BJ (cell line): ENCODE measurements at regions of chr5 and their contacts with region 1.

Region 1: GRCh38 chr5:138241688-138242571 is 28.8 kb upstream of the CDC23 start:
- DNase-seq: no peak
- H3K4me3 ChIP-seq: peak overlapping the region; percentile 33
- H3K27me3 ChIP-seq: peaks cover 34% of the 10 kb centered on the region
- CTCF ChIP-seq: no peak

Region 2: GRCh38 chr5:138230981-138231589 is 10.8 kb before region 1 on chr5:
- CTCF ChIA-PET with region 1: interaction called, 15 read pairs
- POLR2A ChIA-PET with region 1: no interaction called
- DNase-seq: no peak
- H3K4me3 ChIP-seq: no peak overlapping the region
- H3K27me3 ChIP-seq: peaks cover 1% of the 10 kb centered on the region; the same call in 1 of the 2 replicates
- CTCF ChIP-seq: no peak

Region 3: DNA sequence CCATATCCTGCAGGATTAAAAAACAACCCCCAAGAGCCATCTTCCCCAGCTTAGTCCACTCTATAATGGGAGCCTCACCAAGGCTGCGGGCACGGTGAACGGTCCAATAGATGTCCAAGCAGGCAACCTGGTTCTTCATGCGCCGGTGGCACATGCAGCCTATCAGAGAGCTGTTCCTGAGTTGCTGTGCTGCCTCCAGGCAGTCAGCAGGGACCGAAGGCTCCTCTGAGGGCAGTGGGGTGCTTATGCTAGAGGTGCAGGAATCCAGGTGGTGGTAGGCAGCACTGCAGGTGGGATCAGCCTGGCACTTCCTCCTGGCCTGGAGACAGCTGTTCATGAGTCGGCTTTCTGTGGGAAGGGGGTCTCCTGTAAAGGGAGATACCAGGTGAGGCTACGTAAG is 22.3 kb after region 1 on chr5:
- CTCF ChIA-PET with region 1: no interaction called
- POLR2A ChIA-PET with region 1: no interaction called
- DNase-seq: no peak
- H3K4me3 ChIP-seq: no peak overlapping the region
- H3K27me3 ChIP-seq: peaks cover 6% of the 10 kb centered on the region
- CTCF ChIP-seq: no peak

Region 4: GRCh38 chr5:138449501-138450239 is 207.7 kb after region 1 on chr5:
- CTCF ChIA-PET with region 1: no interaction called
- POLR2A ChIA-PET with region 1: no interaction called
- DNase-seq: no peak
- H3K4me3 ChIP-seq: no peak overlapping the region
- H3K27me3 ChIP-seq: no peaks in the 10 kb centered on the region
- CTCF ChIP-seq: peak; percentile 94

Region 5: DNA sequence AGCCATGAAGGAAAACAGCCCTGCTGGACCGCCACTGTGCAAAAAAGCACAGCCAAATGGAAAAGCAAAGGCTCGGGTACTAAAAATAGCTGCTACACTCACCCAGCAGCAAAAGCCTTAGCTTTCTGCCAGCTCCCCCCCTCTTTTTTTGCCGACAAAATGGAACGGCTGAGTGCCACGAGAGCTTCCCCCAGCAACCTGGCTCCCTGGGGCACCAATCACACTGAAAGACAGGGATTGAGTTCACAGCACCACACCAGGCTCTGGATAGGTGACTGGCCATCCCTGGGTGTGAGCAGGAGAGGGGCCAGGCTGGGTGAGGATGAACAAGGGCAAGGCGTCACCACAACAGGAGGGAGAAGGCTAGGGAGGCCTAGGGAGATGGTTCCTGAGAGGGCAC is 889.5 kb after region 1 on chr5:
- CTCF ChIA-PET with region 1: no interaction called
- POLR2A ChIA-PET with region 1: no interaction called
- DNase-seq: no peak
- H3K4me3 ChIP-seq: no peak overlapping the region
- H3K27me3 ChIP-seq: no peaks in the 10 kb centered on the region
- CTCF ChIP-seq: no peak